Mucosa of descending colon (tissue), 3 donors: ENCODE measurements at regions of chr6 and their contacts with region 1.

Region 1: DNA sequence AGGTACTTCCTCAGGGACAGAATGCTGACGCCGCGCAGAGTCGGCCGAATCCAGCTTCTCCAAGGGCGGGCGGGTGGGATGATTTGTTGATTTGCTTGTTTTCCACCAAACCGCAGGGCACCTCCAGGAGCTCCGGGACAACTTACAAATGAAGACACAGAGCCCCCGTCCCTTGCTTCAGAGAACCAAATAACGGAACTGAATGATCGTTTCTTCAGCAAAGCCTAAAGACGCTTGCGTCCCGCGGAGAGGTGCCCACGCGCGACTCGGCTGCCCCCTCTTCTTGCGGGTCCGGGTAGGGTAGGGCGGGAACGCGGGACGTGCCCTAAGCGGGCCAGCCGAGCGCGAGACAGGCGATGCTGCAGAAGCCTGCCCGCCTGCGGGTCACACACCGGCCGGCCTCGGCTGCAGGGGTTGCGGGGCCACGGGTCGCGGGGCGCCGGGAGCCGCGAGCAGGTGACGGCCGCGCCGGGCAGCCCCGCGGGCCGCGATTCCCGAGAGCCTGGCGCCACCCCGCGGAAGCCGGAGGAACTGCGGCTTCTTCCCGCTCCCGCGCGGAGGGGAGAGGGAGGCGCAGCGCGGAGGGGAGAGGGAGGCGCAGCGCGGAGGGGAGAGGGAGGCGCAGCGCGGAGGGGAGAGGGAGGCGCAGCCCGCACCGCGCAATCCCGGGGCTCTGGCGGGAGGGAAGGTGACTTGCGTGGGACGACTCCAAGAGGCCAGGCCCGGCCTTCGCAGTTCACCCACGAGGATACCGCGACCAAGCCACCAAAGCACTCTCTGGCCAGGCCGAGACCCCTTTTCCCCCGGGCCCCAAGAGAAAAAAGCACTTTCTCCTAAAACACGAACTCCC is 7.7 kb upstream of the FOXF2 start:
- DNase-seq: peak in 2 of 3 donors; percentile 63 to 73
- ATAC-seq: peak; percentile 83
- H3K4me3 ChIP-seq: no peak overlapping the region
- H3K4me1 ChIP-seq: peaks cover 18% of the 10 kb centered on the region
- CTCF ChIP-seq: peak; percentile 80

Region 2: GRCh38 chr6:797479-798077 is 584.1 kb before region 1 on chr6:
- intact Hi-C with region 1: loop called in 1 of 2 experiments (anchors 10 kb)
- DNase-seq: peak in 1 of 3 donors; percentile 82
- ATAC-seq: peak; percentile 63
- H3K4me3 ChIP-seq: no peak overlapping the region
- H3K4me1 ChIP-seq: no peaks in the 10 kb centered on the region
- CTCF ChIP-seq: peak; percentile 45

Region 3: GRCh38 chr6:2853761-2854395 is 1472.2 kb after region 1 on chr6:
- intact Hi-C with region 1: no loop called
- DNase-seq: peak in 1 of 3 donors; percentile 61
- ATAC-seq: peak; percentile 52
- H3K4me3 ChIP-seq: no peak overlapping the region
- H3K4me1 ChIP-seq: peaks cover 6% of the 10 kb centered on the region
- CTCF ChIP-seq: no peak